HepG2 (cell line): ENCODE measurements at regions of chr11 and their contacts with region 1.

Region 1: GRCh38 chr11:111841370-111842053 is 29.9 kb downstream of the ALG9 start:
- DNase-seq: peak; percentile 77
- ATAC-seq: peak; percentile 81
- H3K4me3 ChIP-seq: no peak overlapping the region
- H3K27ac ChIP-seq: peak overlapping the region; percentile 70
- H3K4me1 ChIP-seq: peaks cover 33% of the 10 kb centered on the region
- H3K27me3 ChIP-seq: no peaks in the 10 kb centered on the region
- CTCF ChIP-seq: peak; percentile 95
- EP300 ChIP-seq: no peak
- POLR2A ChIP-seq: no peak
- RAD21 ChIP-seq: peak; percentile 90

Region 2: GRCh38 chr11:111454561-111455192 is 386.8 kb before region 1 on chr11:
- CTCF ChIA-PET with region 1: no interaction called
- POLR2A ChIA-PET with region 1: no interaction called
- in situ Hi-C with region 1: loop called (anchors 10 kb)
- intact Hi-C with region 1: loop called (anchors 5 kb)
- DNase-seq: peak; percentile 42
- ATAC-seq: peak; percentile 77
- H3K4me3 ChIP-seq: peak overlapping the region; percentile 31 to 70 (median 37); a peak in 5 of 6 replicates
- H3K27ac ChIP-seq: no peak overlapping the region
- H3K4me1 ChIP-seq: peaks cover 30% of the 10 kb centered on the region
- H3K27me3 ChIP-seq: peaks cover 9 to 46% of the 10 kb centered on the region in 2 experiments; a peak in 4 of 5 replicates
- CTCF ChIP-seq: peak; percentile 64
- EP300 ChIP-seq: no peak
- POLR2A ChIP-seq: no peak
- RAD21 ChIP-seq: no peak

Region 3: GRCh38 chr11:111586388-111586831 is 255.1 kb before region 1 on chr11:
- CTCF ChIA-PET with region 1: interaction called, 22 read pairs
- POLR2A ChIA-PET with region 1: no interaction called
- in situ Hi-C with region 1: no loop called
- intact Hi-C with region 1: loop called (anchors 1 kb)
- DNase-seq: peak; percentile 51
- ATAC-seq: peak; percentile 65
- H3K4me3 ChIP-seq: no peak overlapping the region
- H3K27ac ChIP-seq: no peak overlapping the region
- H3K4me1 ChIP-seq: peaks cover 38% of the 10 kb centered on the region
- H3K27me3 ChIP-seq: no peaks in the 10 kb centered on the region
- CTCF ChIP-seq: peak; percentile 72
- EP300 ChIP-seq: no peak
- POLR2A ChIP-seq: no peak
- RAD21 ChIP-seq: peak; percentile 50; the same call in 1 of the 2 replicates

Region 4: GRCh38 chr11:111766093-111766833 is 75.2 kb before region 1 on chr11 and contains the start of gene PPP2R1B:
- CTCF ChIA-PET with region 1: no interaction called
- POLR2A ChIA-PET with region 1: interaction called, 12 read pairs
- in situ Hi-C with region 1: no loop called
- intact Hi-C with region 1: no loop called
- DNase-seq: peak; percentile 42
- ATAC-seq: peak; percentile 98
- H3K4me3 ChIP-seq: peak within 1 kb of the TSS; percentile 89 to 98 (median 93)
- H3K27ac ChIP-seq: peak within 1 kb of the TSS; percentile 94
- H3K4me1 ChIP-seq: peaks cover 38% of the 10 kb centered on the region
- H3K27me3 ChIP-seq: no peaks in the 10 kb centered on the region; a peak in 1 of 5 replicates
- CTCF ChIP-seq: no peak
- EP300 ChIP-seq: no peak
- POLR2A ChIP-seq: peak; percentile 83 to 87
- RAD21 ChIP-seq: no peak
- total RNA-seq, gene PPP2R1B: 56.8 and 93.9 TPM in 2 replicates